A549 (cell line): ENCODE measurements at regions of chr1 and their contacts with region 1.

Region 1: DNA sequence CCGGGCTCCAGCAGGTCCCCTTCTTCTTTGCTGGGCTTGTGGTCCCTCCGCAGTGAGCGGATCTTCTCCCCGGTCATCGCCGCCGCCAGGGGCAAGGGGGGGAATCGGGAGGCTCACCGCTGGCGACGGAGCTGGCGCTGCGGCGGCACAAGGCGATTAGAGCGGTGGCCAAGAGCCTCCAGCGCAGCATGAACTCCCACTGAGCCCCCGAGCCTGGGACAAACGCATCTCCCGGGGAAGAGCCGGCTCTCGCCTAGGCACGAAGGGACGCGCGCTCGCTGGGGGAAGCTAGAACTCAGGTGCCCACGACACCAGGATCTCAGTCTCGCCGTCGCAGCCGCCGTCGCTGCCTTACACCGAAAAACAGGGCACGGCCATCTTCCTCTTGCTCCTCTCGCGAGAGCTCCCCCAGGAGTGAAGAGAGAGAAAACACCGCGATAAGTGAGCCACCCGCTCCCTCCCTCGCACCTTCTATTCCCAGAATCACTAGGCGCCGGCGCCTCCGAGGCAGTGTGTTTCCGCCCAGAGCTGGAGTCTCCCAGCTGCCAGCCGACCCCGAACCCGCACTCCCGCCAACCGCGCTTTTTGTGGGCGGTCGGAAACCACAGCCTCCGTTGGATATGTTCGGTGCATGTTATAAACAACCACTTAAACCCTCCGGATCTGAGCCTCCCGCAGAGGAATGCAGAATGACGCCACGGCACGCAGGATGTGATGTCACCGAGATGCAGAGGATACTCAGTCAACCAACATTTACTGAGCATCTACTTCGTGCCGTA is at the start of gene ANKRD13C:
- DNase-seq: peak; percentile 83 to 94
- ATAC-seq: peak; percentile 98 to 99
- H3K4me3 ChIP-seq: peak within 1 kb of the TSS; percentile 67
- H3K27ac ChIP-seq: peak within 1 kb of the TSS; percentile 94 to 95
- H3K4me1 ChIP-seq: peaks cover 18% of the 10 kb centered on the region
- CTCF ChIP-seq: no peak
- EP300 ChIP-seq: no peak
- POLR2A ChIP-seq: peak; percentile 79
- RAD21 ChIP-seq: no peak
- polyA plus RNA-seq, gene ANKRD13C: 9.2 and 12.5 TPM in 2 replicates

Region 2: GRCh38 chr1:70410604-70411359 is 56.3 kb after region 1 on chr1 and contains the start of gene CTH:
- CTCF ChIA-PET with region 1: interaction called, 4 read pairs
- POLR2A ChIA-PET with region 1: interaction called, 62 read pairs
- DNase-seq: peak; percentile 87 to 96
- ATAC-seq: peak; percentile 99
- H3K4me3 ChIP-seq: peak within 1 kb of the TSS; percentile 57
- H3K27ac ChIP-seq: peak within 1 kb of the TSS; percentile 64 to 87
- H3K4me1 ChIP-seq: peaks cover 6% of the 10 kb centered on the region; the same call in 1 of the 3 replicates
- CTCF ChIP-seq: no peak
- EP300 ChIP-seq: no peak
- POLR2A ChIP-seq: peak; percentile 49
- RAD21 ChIP-seq: no peak
- polyA plus RNA-seq, gene CTH: 6.8 and 7.2 TPM in 2 replicates